ENCODE measurements at regions of chr2 and their contacts with region 1.

Region 1: DNA sequence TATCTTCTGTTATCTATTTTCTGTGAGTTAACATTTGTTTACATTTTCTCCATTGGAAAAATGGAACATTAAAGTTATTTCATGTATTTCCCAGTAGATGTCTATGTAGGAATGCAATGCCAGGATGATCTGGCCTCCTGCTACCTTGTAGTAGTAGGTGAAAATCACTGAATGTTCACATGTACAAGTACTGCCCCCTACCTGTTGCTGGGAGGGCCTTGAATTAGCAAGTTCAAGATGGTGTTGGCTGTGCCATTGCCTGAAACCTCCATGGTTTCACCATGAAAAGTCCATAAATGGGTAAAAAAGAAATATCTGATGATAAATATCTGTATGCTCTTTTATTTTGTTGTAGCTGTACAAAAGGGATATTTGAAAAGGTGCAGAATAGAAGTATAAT is 30.7 kb downstream of the XRCC5 start:
- DNase-seq: peak in 32 of 35 experiments; percentile 3 to 66 (median 30)
- ATAC-seq: peak in 3 of 4 experiments; percentile 58 to 79 (median 64)
- H3K4me3 ChIP-seq: no peak overlapping the region
- H3K4me3 Mint-ChIP-seq: no peak overlapping the region
- H3K27ac ChIP-seq: no peak overlapping the region
- H3K27ac Mint-ChIP-seq: peak overlapping the region; percentile 8 to 11
- H3K4me1 ChIP-seq: peaks cover 0 to 3% of the 10 kb centered on the region in 2 experiments
- H3K4me1 Mint-ChIP-seq: peaks cover 22 to 28% (median 24%) of the 10 kb centered on the region in 3 donors
- H3K27me3 ChIP-seq: no peaks in the 10 kb centered on the region
- H3K27me3 Mint-ChIP-seq: no peaks in the 10 kb centered on the region

Region 2: GRCh38 chr2:215609089-215610032 is 530.5 kb before region 1 on chr2:
- CTCF ChIA-PET with region 1: no interaction called
- POLR2A ChIA-PET with region 1: no interaction called
- DNase-seq: no peak
- ATAC-seq: no peak
- H3K4me3 ChIP-seq: no peak overlapping the region
- H3K4me3 Mint-ChIP-seq: no peak overlapping the region
- H3K27ac ChIP-seq: no peak overlapping the region
- H3K27ac Mint-ChIP-seq: no peak overlapping the region
- H3K4me1 ChIP-seq: no peaks in the 10 kb centered on the region
- H3K4me1 Mint-ChIP-seq: no peaks in the 10 kb centered on the region
- H3K27me3 ChIP-seq: peaks cover 0 to 2% of the 10 kb centered on the region in 2 experiments
- H3K27me3 Mint-ChIP-seq: peaks cover 0 to 2% of the 10 kb centered on the region in 2 donors

Region 3: GRCh38 chr2:216034065-216034464 is 105.8 kb before region 1 on chr2:
- CTCF ChIA-PET with region 1: interaction called, 12 read pairs
- POLR2A ChIA-PET with region 1: no interaction called
- DNase-seq: peak; percentile 30 to 85 (median 67)
- ATAC-seq: peak; percentile 72 to 83 (median 80)
- H3K4me3 ChIP-seq: no peak overlapping the region
- H3K4me3 Mint-ChIP-seq: no peak overlapping the region
- H3K27ac ChIP-seq: no peak overlapping the region
- H3K27ac Mint-ChIP-seq: no peak overlapping the region
- H3K4me1 ChIP-seq: peaks cover 4% of the 10 kb centered on the region in 2 experiments
- H3K4me1 Mint-ChIP-seq: peaks cover 12 to 25% (median 15%) of the 10 kb centered on the region in 3 donors
- H3K27me3 ChIP-seq: no peaks in the 10 kb centered on the region
- H3K27me3 Mint-ChIP-seq: no peaks in the 10 kb centered on the region

Region 4: GRCh38 chr2:216171011-216171410 is 31.1 kb after region 1 on chr2:
- CTCF ChIA-PET with region 1: interaction called in 1 of 2 experiments, 15 read pairs
- POLR2A ChIA-PET with region 1: interaction called in 1 of 2 experiments, 4 read pairs
- DNase-seq: no peak
- ATAC-seq: no peak
- H3K4me3 ChIP-seq: no peak overlapping the region
- H3K4me3 Mint-ChIP-seq: no peak overlapping the region
- H3K27ac ChIP-seq: no peak overlapping the region
- H3K27ac Mint-ChIP-seq: no peak overlapping the region
- H3K4me1 ChIP-seq: peaks cover 0 to 3% of the 10 kb centered on the region in 2 experiments
- H3K4me1 Mint-ChIP-seq: peaks cover 51 to 68% (median 62%) of the 10 kb centered on the region in 3 donors
- H3K27me3 ChIP-seq: no peaks in the 10 kb centered on the region
- H3K27me3 Mint-ChIP-seq: no peaks in the 10 kb centered on the region

Measured in T-cell (primary cell).